Mucosa of descending colon (tissue), 3 donors: ENCODE measurements at regions of chr3 and their contacts with region 1.

Region 1: GRCh38 chr3:64030741-64031140 is 7.4 kb upstream of the PSMD6 start:
- DNase-seq: peak; percentile 72 to 76 (median 74)
- ATAC-seq: peak; percentile 98
- H3K4me3 ChIP-seq: no peak overlapping the region
- H3K4me1 ChIP-seq: no peaks in the 10 kb centered on the region
- CTCF ChIP-seq: peak; percentile 77

Region 2: DNA sequence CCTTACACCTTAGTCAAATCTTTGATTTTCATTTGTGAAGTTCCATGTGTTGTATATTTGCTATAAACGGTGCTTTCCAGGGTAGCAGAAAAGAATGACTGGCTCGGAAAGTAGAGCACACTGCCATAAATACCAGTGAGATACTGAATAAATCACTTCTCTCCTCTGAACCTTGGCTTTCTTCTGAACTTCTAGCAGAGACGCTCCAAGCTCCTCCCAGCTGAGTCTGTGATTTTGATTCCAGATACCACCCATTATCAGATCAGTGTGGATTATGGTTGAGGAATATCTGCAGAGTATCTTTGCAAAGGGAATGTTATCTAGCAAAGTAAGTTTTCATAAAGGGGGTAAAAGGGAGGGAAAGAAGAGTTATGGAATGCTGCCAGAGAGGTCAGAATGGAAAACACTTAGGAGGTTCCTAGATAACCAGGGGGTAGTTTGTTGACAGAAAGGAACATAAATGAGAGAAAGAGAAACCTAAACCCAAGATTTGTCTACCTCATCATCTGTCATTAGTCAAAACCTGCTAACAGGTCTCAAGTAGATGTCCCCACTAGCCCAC is 91.1 kb after region 1 on chr3:
- intact Hi-C with region 1: no loop called
- DNase-seq: no peak
- ATAC-seq: no peak
- H3K4me3 ChIP-seq: no peak overlapping the region
- H3K4me1 ChIP-seq: no peaks in the 10 kb centered on the region
- CTCF ChIP-seq: no peak

Region 3: DNA sequence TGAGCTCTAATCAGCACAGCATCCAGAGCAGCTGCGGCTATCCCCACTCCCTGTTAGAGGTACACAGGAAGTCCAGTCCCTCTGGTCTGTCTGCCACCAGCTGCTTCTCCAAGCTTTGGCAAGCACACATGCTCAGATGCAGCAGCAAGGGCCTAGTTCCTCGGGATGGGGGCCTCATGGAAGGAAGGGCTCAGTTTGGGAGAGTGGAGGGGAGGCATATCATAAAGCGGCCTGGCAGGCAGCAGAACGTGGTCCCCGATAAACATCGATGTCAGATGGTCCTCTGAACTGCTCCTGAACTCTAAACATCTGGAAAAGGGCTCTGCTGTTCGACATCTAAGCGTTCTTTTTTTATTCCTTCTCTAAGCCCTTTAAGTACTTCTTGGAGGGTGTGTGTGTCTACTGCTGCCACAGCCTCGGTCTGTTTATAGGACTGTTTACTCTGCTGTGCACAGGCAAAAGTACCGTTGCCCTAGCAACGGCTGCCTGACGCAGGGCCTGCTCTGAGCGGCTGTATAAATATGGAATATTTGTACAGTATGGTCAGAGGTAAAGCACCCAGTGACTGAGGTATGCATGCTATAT is 120.0 kb after region 1 on chr3:
- intact Hi-C with region 1: no loop called
- DNase-seq: peak; percentile 81 to 85 (median 83)
- ATAC-seq: peak; percentile 97
- H3K4me3 ChIP-seq: no peak overlapping the region
- H3K4me1 ChIP-seq: peaks cover 27% of the 10 kb centered on the region
- CTCF ChIP-seq: no peak

Region 4: GRCh38 chr3:64267721-64268604 is 237.2 kb after region 1 on chr3:
- intact Hi-C with region 1: loop called in 1 of 2 experiments (anchors 10 kb)
- DNase-seq: peak; percentile 31 to 55 (median 39)
- ATAC-seq: peak; percentile 58
- H3K4me3 ChIP-seq: peak overlapping the region; percentile 17
- H3K4me1 ChIP-seq: peaks cover 4% of the 10 kb centered on the region
- CTCF ChIP-seq: no peak

Region 5: DNA sequence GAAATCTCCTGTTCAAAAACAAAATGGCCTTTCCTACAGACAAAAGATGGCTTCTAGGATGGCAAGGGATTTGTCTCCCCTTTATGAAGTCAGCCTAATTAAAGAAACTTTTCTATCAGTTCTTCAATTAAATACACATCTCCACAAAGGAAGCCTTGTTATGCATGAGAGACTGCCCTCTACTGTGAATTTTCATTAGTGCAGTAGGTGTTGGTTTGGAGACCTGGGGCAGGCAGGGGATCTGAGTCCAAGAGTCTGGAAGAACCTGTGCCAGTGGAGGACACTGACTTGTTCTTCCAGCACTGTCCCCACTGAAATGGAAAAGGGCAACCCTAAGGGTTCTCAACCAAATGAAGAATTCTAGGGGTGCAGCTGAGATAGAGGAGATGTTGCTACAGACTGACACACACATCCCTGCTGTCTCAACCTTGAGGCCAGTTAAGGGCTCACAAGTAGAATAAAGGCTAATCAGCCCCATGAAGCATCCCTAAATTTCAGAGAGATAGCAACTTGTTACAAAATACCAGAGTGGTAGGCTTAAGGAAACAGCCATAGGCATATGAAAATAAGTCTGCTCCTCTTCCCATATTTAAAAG is 368.6 kb after region 1 on chr3:
- intact Hi-C with region 1: loop called (anchors 5 kb)
- DNase-seq: peak in 1 of 3 donors; percentile 70
- ATAC-seq: peak; percentile 56
- H3K4me3 ChIP-seq: no peak overlapping the region
- H3K4me1 ChIP-seq: no peaks in the 10 kb centered on the region
- CTCF ChIP-seq: peak; percentile 19

Region 6: GRCh38 chr3:64484289-64484992 is 453.7 kb after region 1 on chr3:
- intact Hi-C with region 1: loop called (anchors 2 to 5 kb)
- DNase-seq: peak in 2 of 3 donors; percentile 79 to 83
- ATAC-seq: peak; percentile 93
- H3K4me3 ChIP-seq: no peak overlapping the region
- H3K4me1 ChIP-seq: no peaks in the 10 kb centered on the region
- CTCF ChIP-seq: peak; percentile 78